Endothelial cell of umbilical vein (primary cell): ENCODE measurements at regions of chr11 and their contacts with region 1.

Region 1: DNA sequence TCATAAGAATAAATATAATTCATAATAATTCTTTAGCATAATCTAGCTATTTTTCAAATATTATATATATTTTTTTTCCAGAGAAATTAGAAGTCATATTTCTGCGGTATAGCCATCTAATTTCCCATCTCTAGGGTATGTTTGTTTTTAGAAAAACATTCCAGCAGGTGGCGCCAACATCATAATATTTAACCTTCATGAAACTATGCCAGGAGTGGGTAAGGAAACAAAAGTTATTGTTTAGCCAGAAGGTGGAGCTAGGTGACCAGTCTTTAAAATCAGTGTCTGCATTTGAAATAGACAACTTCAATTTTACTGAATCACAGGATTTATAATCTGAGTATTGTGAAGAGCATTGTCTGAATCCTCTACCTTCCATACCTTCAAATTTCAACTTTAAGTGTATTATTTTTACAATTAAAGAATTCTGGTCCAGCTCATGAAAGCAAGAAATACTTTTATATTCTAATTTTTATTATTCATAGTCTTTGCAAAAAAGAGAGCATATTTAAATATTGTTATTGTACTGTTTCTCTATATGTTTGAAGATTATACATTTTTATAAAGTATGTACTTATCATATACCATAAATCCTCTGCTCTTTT is 15.7 kb upstream of the CCDC179 start:
- DNase-seq: peak; percentile 89
- H3K4me3 ChIP-seq: no peak overlapping the region
- H3K27ac ChIP-seq: no peak overlapping the region
- H3K4me1 ChIP-seq: peaks cover 3% of the 10 kb centered on the region
- H3K27me3 ChIP-seq: no peaks in the 10 kb centered on the region
- CTCF ChIP-seq: peak; percentile 52 to 60
- POLR2A ChIP-seq: no peak

Region 2: DNA sequence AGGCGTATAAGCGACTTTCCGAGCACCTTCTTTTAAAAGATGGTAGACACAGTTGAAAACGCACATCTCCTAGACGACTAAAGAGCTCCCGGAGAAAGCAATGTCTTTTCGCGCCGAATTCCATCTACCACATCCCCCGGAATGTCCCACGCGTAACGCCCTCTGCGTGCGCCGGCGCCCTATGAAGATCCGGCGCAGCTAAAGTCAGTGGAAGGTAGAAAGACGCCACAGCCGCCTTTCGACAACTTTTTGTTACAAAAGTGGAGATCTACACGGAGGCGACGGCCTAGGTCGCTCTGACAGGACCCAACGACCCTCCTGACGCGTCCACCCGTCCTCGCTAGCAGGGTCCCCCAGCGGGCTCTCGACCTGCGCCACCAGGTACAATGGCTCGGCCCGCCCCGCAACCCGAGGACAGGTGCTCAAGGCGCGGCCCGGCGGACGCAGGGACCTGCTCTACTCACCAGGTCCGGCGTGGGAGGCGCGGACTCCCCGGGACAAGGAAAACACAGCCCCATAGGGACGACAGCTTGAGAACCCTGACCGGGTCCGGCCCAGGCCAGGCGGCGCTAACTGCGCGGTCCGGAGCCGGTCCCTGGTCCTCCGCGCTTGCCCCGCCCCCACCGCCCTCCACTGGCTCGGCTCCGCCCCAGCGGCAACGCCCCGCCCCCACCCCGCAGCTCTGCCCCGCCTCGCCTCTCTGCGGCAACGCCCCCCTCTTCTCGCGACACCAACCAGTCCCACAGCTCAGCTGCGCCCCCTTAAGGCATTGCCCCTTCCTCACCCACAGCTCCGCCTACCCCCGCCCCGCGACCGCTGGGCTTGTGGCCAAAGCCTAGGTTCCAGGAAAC is 46.5 kb before region 1 on chr11 and contains the start of gene SVIP:
- CTCF ChIA-PET with region 1: interaction called, 22 read pairs
- POLR2A ChIA-PET with region 1: no interaction called
- dilution Hi-C with region 1: no loop called
- intact Hi-C with region 1: no loop called
- DNase-seq: peak; percentile 99
- H3K4me3 ChIP-seq: peak within 1 kb of the TSS; percentile 91 to 99 (median 95)
- H3K27ac ChIP-seq: peak within 1 kb of the TSS; percentile 86
- H3K4me1 ChIP-seq: peaks cover 26% of the 10 kb centered on the region
- H3K27me3 ChIP-seq: no peaks in the 10 kb centered on the region
- CTCF ChIP-seq: peak; percentile 76 to 88
- POLR2A ChIP-seq: peak; percentile 94
- total RNA-seq, gene SVIP: 69.5 and 70.5 TPM in 2 replicates

Region 3: GRCh38 chr11:22920939-22921565 is 45.1 kb after region 1 on chr11:
- CTCF ChIA-PET with region 1: interaction called, 7 read pairs
- POLR2A ChIA-PET with region 1: no interaction called
- dilution Hi-C with region 1: no loop called
- intact Hi-C with region 1: loop called (anchors 2 kb)
- DNase-seq: peak; percentile 65
- H3K4me3 ChIP-seq: no peak overlapping the region
- H3K27ac ChIP-seq: no peak overlapping the region
- H3K4me1 ChIP-seq: peaks cover 6% of the 10 kb centered on the region
- H3K27me3 ChIP-seq: no peaks in the 10 kb centered on the region
- CTCF ChIP-seq: peak; percentile 74 to 84
- POLR2A ChIP-seq: no peak

Region 4: GRCh38 chr11:23112987-23113886 is 237.3 kb after region 1 on chr11:
- CTCF ChIA-PET with region 1: interaction called, 25 read pairs
- POLR2A ChIA-PET with region 1: no interaction called
- dilution Hi-C with region 1: no loop called
- intact Hi-C with region 1: loop called (anchors 1 kb)
- DNase-seq: peak; percentile 73
- H3K4me3 ChIP-seq: no peak overlapping the region
- H3K27ac ChIP-seq: no peak overlapping the region
- H3K4me1 ChIP-seq: peaks cover 3% of the 10 kb centered on the region
- H3K27me3 ChIP-seq: no peaks in the 10 kb centered on the region
- CTCF ChIP-seq: peak; percentile 56 to 62
- POLR2A ChIP-seq: no peak

Region 5: GRCh38 chr11:23932485-23932898 is 1056.5 kb after region 1 on chr11:
- CTCF ChIA-PET with region 1: no interaction called
- POLR2A ChIA-PET with region 1: no interaction called
- dilution Hi-C with region 1: no loop called
- intact Hi-C with region 1: loop called (anchors 1 kb)
- DNase-seq: peak; percentile 82
- H3K4me3 ChIP-seq: no peak overlapping the region
- H3K27ac ChIP-seq: peak overlapping the region; percentile 76
- H3K4me1 ChIP-seq: peaks cover 20% of the 10 kb centered on the region
- H3K27me3 ChIP-seq: no peaks in the 10 kb centered on the region
- CTCF ChIP-seq: no peak
- POLR2A ChIP-seq: no peak

Region 6: DNA sequence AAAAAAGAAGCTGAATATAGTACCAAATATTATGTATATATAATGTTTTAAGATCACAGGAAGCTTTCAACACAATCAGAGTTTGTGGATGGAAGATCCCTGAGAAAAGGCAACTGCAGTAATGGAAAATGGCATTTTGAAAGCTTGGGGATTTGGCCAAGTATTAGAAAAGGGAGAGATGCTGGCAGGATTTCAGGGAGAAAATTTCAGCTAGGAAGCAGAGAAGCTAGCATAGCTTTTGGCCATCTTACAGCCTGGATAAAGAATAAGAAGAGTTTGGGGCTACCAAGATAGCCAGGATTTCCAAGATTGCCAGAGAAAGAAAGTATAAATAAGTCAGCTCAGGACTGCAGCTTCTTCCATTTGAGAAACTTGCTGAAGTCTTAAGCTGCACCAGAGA is 1180.1 kb after region 1 on chr11:
- CTCF ChIA-PET with region 1: no interaction called
- POLR2A ChIA-PET with region 1: no interaction called
- dilution Hi-C with region 1: no loop called
- intact Hi-C with region 1: no loop called
- DNase-seq: no peak
- H3K4me3 ChIP-seq: no peak overlapping the region
- H3K27ac ChIP-seq: no peak overlapping the region
- H3K4me1 ChIP-seq: no peaks in the 10 kb centered on the region
- H3K27me3 ChIP-seq: no peaks in the 10 kb centered on the region
- CTCF ChIP-seq: no peak
- POLR2A ChIP-seq: no peak

Region 7: GRCh38 chr11:24386546-24387397 is 1510.8 kb after region 1 on chr11:
- CTCF ChIA-PET with region 1: interaction called, 30 read pairs
- POLR2A ChIA-PET with region 1: no interaction called
- dilution Hi-C with region 1: no loop called
- intact Hi-C with region 1: loop called (anchors 1 kb)
- DNase-seq: peak; percentile 38
- H3K4me3 ChIP-seq: no peak overlapping the region
- H3K27ac ChIP-seq: no peak overlapping the region
- H3K4me1 ChIP-seq: no peaks in the 10 kb centered on the region
- H3K27me3 ChIP-seq: no peaks in the 10 kb centered on the region
- CTCF ChIP-seq: peak; percentile 18 to 30
- POLR2A ChIP-seq: no peak